Activated B cell treated with CpG ODN at 0.5 μM for 24 hours (primary cell): ENCODE measurements at regions of chr22 and their contacts with region 1.

Region 1: GRCh38 chr22:38872172-38872830 is at the start of gene CBX6:
- DNase-seq: peak; percentile 97
- ATAC-seq: peak; percentile 73
- H3K4me3 Mint-ChIP-seq: peak within 1 kb of the TSS; percentile 92
- H3K27ac Mint-ChIP-seq: peak within 1 kb of the TSS; percentile 83
- H3K4me1 Mint-ChIP-seq: peaks cover 53% of the 10 kb centered on the region
- H3K27me3 Mint-ChIP-seq: peaks cover 2% of the 10 kb centered on the region
- CTCF ChIP-seq: no peak
- total RNA-seq, gene CBX6: 65.6 and 71.8 TPM in 2 replicates

Region 2: GRCh38 chr22:38398609-38399461 is 473.5 kb before region 1 on chr22:
- CTCF ChIA-PET with region 1: no interaction called
- POLR2A ChIA-PET with region 1: no interaction called
- intact Hi-C with region 1: loop called (anchors 2 kb)
- DNase-seq: peak; percentile 79
- ATAC-seq: peak; percentile 73
- H3K4me3 Mint-ChIP-seq: peak overlapping the region; percentile 82
- H3K27ac Mint-ChIP-seq: peak overlapping the region; percentile 84
- H3K4me1 Mint-ChIP-seq: peaks cover 37% of the 10 kb centered on the region
- H3K27me3 Mint-ChIP-seq: no peaks in the 10 kb centered on the region
- CTCF ChIP-seq: no peak

Region 3: GRCh38 chr22:38941488-38941987 is 69.2 kb after region 1 on chr22:
- CTCF ChIA-PET with region 1: interaction called, 4 read pairs
- POLR2A ChIA-PET with region 1: interaction called, 11 read pairs
- intact Hi-C with region 1: loop called (anchors 1 kb)
- DNase-seq: peak; percentile 35
- ATAC-seq: peak; percentile 92
- H3K4me3 Mint-ChIP-seq: peak overlapping the region; percentile 62
- H3K27ac Mint-ChIP-seq: peak overlapping the region; percentile 82
- H3K4me1 Mint-ChIP-seq: peaks cover 45% of the 10 kb centered on the region
- H3K27me3 Mint-ChIP-seq: peaks cover 13% of the 10 kb centered on the region
- CTCF ChIP-seq: no peak

Region 4: DNA sequence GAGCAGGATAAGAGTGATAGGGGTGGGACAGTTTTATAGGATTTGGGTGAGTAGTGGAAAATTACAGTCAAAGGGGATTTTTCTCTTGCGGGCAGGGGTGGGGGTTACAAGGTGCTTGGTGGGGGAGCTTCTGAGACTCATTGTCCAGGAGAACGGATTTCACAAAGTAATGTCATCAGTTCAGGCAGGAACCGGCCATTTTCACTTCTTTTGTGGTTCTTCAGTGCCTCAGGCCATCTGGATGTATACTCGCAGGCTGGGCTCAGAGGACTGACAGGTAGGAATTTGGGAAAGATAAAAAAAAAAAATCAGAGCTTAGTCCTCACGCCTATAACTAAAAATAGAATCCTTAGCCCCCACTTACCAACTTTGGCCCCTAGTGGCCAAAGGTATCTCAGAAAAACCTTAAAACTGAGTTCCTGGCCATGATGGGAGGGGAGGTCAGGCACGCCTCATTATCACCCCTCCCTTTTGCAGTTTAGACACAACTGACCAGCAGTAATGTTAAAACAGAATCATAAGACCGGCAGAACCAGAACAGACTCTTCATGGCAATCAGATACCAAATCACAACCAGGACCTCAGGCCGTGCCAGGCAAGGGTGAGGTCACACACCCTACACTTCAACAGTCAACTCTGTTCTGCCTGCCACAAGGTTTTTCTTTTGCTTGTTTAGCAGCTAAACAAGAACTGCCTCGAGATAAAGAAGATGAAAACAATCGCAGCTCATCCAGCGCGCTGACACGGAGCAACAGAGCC is 195.9 kb after region 1 on chr22:
- CTCF ChIA-PET with region 1: no interaction called
- POLR2A ChIA-PET with region 1: interaction called, 3 read pairs
- intact Hi-C with region 1: loop called (anchors 2 kb)
- DNase-seq: no peak
- ATAC-seq: no peak
- H3K4me3 Mint-ChIP-seq: no peak overlapping the region
- H3K27ac Mint-ChIP-seq: no peak overlapping the region
- H3K4me1 Mint-ChIP-seq: peaks cover 54% of the 10 kb centered on the region
- H3K27me3 Mint-ChIP-seq: no peaks in the 10 kb centered on the region
- CTCF ChIP-seq: no peak

Region 5: DNA sequence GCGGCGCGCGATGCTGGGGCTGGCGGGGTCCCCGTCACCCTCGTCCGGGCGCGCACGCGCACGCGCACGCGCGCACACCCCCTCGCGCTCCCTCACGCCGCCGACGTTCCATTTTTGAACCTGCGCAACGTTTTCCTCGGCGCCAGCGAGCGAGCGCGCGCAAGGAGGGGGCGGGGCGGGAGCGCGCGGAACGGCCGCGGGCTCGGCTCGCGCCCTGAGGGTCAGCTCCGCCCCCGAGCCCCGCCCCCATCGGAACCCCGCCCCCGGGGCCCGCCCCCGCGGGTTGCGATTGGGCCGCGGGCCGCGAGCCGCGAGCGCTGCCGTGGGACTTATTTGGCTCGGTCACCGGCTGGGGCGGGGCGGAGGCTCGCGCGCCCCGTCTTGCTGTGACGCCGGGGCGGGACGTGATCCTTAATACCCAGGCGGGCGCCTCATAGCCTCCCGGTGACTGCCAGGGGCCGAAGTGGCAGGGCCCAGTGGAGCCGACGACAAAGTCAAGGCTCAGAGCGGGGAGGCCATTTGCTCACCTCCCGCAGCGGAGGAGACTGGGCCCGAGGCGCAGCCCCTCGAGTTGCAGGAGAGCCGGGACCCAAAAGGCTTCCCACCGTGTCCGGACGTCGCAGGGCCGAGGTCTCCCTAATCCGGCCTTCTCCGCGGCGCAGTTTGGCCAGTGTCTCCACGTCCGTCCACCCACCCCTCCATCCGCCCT is 280.4 kb after region 1 on chr22 and contains the start of gene CBX7:
- CTCF ChIA-PET with region 1: interaction called, 4 read pairs
- POLR2A ChIA-PET with region 1: interaction called, 4 read pairs
- intact Hi-C with region 1: loop called (anchors 2 kb)
- DNase-seq: peak; percentile 94
- ATAC-seq: peak; percentile 84
- H3K4me3 Mint-ChIP-seq: peak within 1 kb of the TSS; percentile 84
- H3K27ac Mint-ChIP-seq: peak within 1 kb of the TSS; percentile 76
- H3K4me1 Mint-ChIP-seq: peaks cover 46% of the 10 kb centered on the region
- H3K27me3 Mint-ChIP-seq: peaks cover 16% of the 10 kb centered on the region
- CTCF ChIP-seq: no peak
- total RNA-seq, gene CBX7: 42.6 and 45.4 TPM in 2 replicates